Heart left ventricle (tissue), 16 donors: ENCODE measurements at regions of chr3 and their contacts with region 1.

Region 1: GRCh38 chr3:184250167-184250828 is 826 bp downstream of the EEF1AKMT4 start:
- DNase-seq: peak; percentile 73 to 88 (median 85)
- ATAC-seq: peak; percentile 70 to 84 (median 82)
- H3K4me3 ChIP-seq: peak overlapping the region; percentile 47 to 99 (median 82)
- H3K27ac ChIP-seq: peak overlapping the region in 11 of 12 donors; percentile 25 to 96 (median 76)
- H3K4me1 ChIP-seq: peaks cover 0 to 22% (median 11%) of the 10 kb centered on the region in 12 donors
- H3K27me3 ChIP-seq: no peaks in the 10 kb centered on the region
- CTCF ChIP-seq: peak; percentile 82 to 98 (median 94)
- POLR2A ChIP-seq: no peak

Region 2: GRCh38 chr3:183884427-183885296 is 365.6 kb before region 1 on chr3 and contains the start of gene PARL:
- intact Hi-C with region 1: loop called in 2 of 10 experiments (anchors 2 to 5 kb)
- DNase-seq: peak; percentile 95 to 98 (median 97)
- ATAC-seq: peak; percentile 100
- H3K4me3 ChIP-seq: peak within 1 kb of the TSS; percentile 54 to 99 (median 92)
- H3K27ac ChIP-seq: peak within 1 kb of the TSS; percentile 35 to 88 (median 82)
- H3K4me1 ChIP-seq: peaks cover 0 to 42% (median 23%) of the 10 kb centered on the region in 12 donors
- H3K27me3 ChIP-seq: no peaks in the 10 kb centered on the region
- CTCF ChIP-seq: peak; percentile 89 to 99 (median 96)
- POLR2A ChIP-seq: peak in 1 of 2 donors; percentile 57
- total RNA-seq, gene PARL: 37.9 to 62.2 (median 53.8) TPM

Region 3: GRCh38 chr3:184017672-184018423 is 232.4 kb before region 1 on chr3 and contains the start of gene ABCC5:
- intact Hi-C with region 1: loop called in 4 of 10 experiments (anchors 5 to 10 kb)
- DNase-seq: peak; percentile 94 to 97 (median 96)
- ATAC-seq: peak; percentile 96 to 98 (median 98)
- H3K4me3 ChIP-seq: peak within 1 kb of the TSS; percentile 59 to 99 (median 89)
- H3K27ac ChIP-seq: peak within 1 kb of the TSS; percentile 71 to 93 (median 84)
- H3K4me1 ChIP-seq: peaks cover 0 to 29% (median 15%) of the 10 kb centered on the region in 12 donors
- H3K27me3 ChIP-seq: no peaks in the 10 kb centered on the region
- CTCF ChIP-seq: peak in 9 of 12 donors; percentile 3 to 54 (median 41)
- POLR2A ChIP-seq: peak in 1 of 2 donors; percentile 67
- total RNA-seq, gene ABCC5: 20.8 to 61.7 (median 34.3) TPM

Region 4: GRCh38 chr3:184145111-184145524 is 105.2 kb before region 1 on chr3:
- intact Hi-C with region 1: loop called in 4 of 10 experiments (anchors 5 to 10 kb)
- DNase-seq: peak in 1 of 5 donors; percentile 48
- ATAC-seq: peak; percentile 61 to 76 (median 64)
- H3K4me3 ChIP-seq: no peak overlapping the region
- H3K27ac ChIP-seq: peak overlapping the region in 1 of 12 donors; percentile 12
- H3K4me1 ChIP-seq: peaks cover 0 to 15% (median 3%) of the 10 kb centered on the region in 12 donors
- H3K27me3 ChIP-seq: no peaks in the 10 kb centered on the region
- CTCF ChIP-seq: peak in 11 of 12 donors; percentile 11 to 56 (median 40)
- POLR2A ChIP-seq: no peak

Region 5: GRCh38 chr3:184185461-184186308 is 64.6 kb before region 1 on chr3 and contains the start of gene ABCF3:
- intact Hi-C with region 1: loop called in 6 of 10 experiments (anchors 1 to 10 kb)
- DNase-seq: peak; percentile 99 to 100 (median 100)
- ATAC-seq: peak; percentile 98
- H3K4me3 ChIP-seq: peak within 1 kb of the TSS; percentile 55 to 99 (median 92)
- H3K27ac ChIP-seq: peak within 1 kb of the TSS; percentile 54 to 96 (median 92)
- H3K4me1 ChIP-seq: peaks cover 0 to 33% (median 24%) of the 10 kb centered on the region in 12 donors
- H3K27me3 ChIP-seq: no peaks in the 10 kb centered on the region
- CTCF ChIP-seq: no peak
- POLR2A ChIP-seq: peak in 1 of 2 donors; percentile 73
- total RNA-seq, gene ABCF3: 58.2 to 81.9 (median 69.2) TPM

Region 6: GRCh38 chr3:184227481-184227935 is 22.8 kb before region 1 on chr3:
- intact Hi-C with region 1: loop called in 1 of 10 experiments (anchors 2 kb)
- DNase-seq: no peak
- ATAC-seq: peak in 1 of 4 donors; percentile 34
- H3K4me3 ChIP-seq: no peak overlapping the region
- H3K27ac ChIP-seq: no peak overlapping the region
- H3K4me1 ChIP-seq: peaks cover 0 to 22% (median 12%) of the 10 kb centered on the region in 12 donors
- H3K27me3 ChIP-seq: peaks cover 20 to 63% (median 32%) of the 10 kb centered on the region in 9 donors
- CTCF ChIP-seq: peak; percentile 53 to 81 (median 66)
- POLR2A ChIP-seq: no peak

Region 7: GRCh38 chr3:184977796-184978195 is 727.5 kb after region 1 on chr3:
- intact Hi-C with region 1: no loop called
- DNase-seq: no peak
- ATAC-seq: no peak
- H3K4me3 ChIP-seq: no peak overlapping the region
- H3K27ac ChIP-seq: no peak overlapping the region
- H3K4me1 ChIP-seq: peaks cover 0 to 17% (median 2%) of the 10 kb centered on the region in 12 donors
- H3K27me3 ChIP-seq: no peaks in the 10 kb centered on the region
- CTCF ChIP-seq: no peak
- POLR2A ChIP-seq: no peak